ENCODE measurements at regions of chr9 and their contacts with region 1.

Region 1: GRCh38 chr9:91193658-91194391 is 167.9 kb downstream of the AUH start:
- DNase-seq: peak; percentile 93
- ATAC-seq: peak; percentile 80
- H3K4me3 ChIP-seq: peak overlapping the region; percentile 52 to 68 (median 56); a peak in 5 of 6 replicates
- H3K27ac ChIP-seq: peak overlapping the region; percentile 100
- H3K4me1 ChIP-seq: peaks cover 78% of the 10 kb centered on the region
- H3K27me3 ChIP-seq: no peaks in the 10 kb centered on the region
- CTCF ChIP-seq: peak; percentile 42
- EP300 ChIP-seq: peak in 1 of 2 experiments; percentile 91; a peak in 2 of 4 replicates
- POLR2A ChIP-seq: peak; percentile 79 to 94
- RAD21 ChIP-seq: peak; percentile 65

Region 2: DNA sequence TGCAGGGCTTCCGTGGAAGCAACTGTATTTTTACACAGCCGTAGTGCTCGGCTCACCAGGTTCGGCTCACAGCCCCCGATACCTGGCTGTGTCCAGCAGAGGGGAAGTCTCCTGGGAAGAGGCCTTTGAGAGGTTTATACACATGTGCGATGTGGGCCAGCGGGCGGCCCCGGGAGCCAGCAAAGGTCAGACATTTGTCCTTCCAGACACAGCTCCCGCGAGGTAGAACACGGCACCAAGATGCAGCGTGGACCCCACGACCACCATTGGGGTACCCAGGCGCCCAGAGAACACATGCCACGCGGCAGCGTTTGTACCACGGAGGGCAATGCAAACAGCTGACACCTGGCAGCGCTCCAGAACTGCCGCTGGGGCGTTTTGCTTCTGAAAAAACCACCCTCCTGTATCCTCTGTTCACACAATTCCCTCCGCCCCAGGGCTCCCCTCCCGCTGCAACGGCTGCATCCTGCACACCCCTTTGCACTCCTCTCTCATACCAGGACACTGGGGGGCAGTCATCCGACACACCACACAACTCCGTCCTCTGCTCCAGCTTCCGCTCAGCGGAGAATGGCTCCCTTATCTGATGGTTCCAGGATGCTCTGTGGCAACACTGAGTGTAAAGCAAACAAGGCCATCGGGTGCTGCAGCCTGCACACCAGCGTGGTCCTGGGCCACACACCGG is 156.9 kb before region 1 on chr9:
- CTCF ChIA-PET with region 1: no interaction called
- POLR2A ChIA-PET with region 1: interaction called, 58 read pairs
- in situ Hi-C with region 1: loop called (anchors 10 kb)
- intact Hi-C with region 1: loop called (anchors 1 kb)
- DNase-seq: peak; percentile 98
- ATAC-seq: peak; percentile 97
- H3K4me3 ChIP-seq: peak overlapping the region in 2 of 3 experiments; percentile 18 to 60; a peak in 3 of 6 replicates
- H3K27ac ChIP-seq: peak overlapping the region; percentile 94
- H3K4me1 ChIP-seq: peaks cover 62% of the 10 kb centered on the region
- H3K27me3 ChIP-seq: no peaks in the 10 kb centered on the region
- CTCF ChIP-seq: peak; percentile 99
- EP300 ChIP-seq: peak; percentile 86 to 91
- POLR2A ChIP-seq: peak in 1 of 2 experiments; percentile 83; a peak in 2 of 4 replicates
- RAD21 ChIP-seq: peak; percentile 97

Region 3: GRCh38 chr9:91060503-91061343 is 133.1 kb before region 1 on chr9:
- CTCF ChIA-PET with region 1: no interaction called
- POLR2A ChIA-PET with region 1: interaction called, 15 read pairs
- in situ Hi-C with region 1: no loop called
- intact Hi-C with region 1: loop called (anchors 10 kb)
- DNase-seq: peak; percentile 94
- ATAC-seq: peak; percentile 91
- H3K4me3 ChIP-seq: peak overlapping the region in 1 of 3 experiments; percentile 25; a peak in 1 of 6 replicates
- H3K27ac ChIP-seq: peak overlapping the region; percentile 87
- H3K4me1 ChIP-seq: peaks cover 51% of the 10 kb centered on the region
- H3K27me3 ChIP-seq: no peaks in the 10 kb centered on the region
- CTCF ChIP-seq: no peak
- EP300 ChIP-seq: peak; percentile 85 to 89
- POLR2A ChIP-seq: no peak
- RAD21 ChIP-seq: no peak

Region 4: DNA sequence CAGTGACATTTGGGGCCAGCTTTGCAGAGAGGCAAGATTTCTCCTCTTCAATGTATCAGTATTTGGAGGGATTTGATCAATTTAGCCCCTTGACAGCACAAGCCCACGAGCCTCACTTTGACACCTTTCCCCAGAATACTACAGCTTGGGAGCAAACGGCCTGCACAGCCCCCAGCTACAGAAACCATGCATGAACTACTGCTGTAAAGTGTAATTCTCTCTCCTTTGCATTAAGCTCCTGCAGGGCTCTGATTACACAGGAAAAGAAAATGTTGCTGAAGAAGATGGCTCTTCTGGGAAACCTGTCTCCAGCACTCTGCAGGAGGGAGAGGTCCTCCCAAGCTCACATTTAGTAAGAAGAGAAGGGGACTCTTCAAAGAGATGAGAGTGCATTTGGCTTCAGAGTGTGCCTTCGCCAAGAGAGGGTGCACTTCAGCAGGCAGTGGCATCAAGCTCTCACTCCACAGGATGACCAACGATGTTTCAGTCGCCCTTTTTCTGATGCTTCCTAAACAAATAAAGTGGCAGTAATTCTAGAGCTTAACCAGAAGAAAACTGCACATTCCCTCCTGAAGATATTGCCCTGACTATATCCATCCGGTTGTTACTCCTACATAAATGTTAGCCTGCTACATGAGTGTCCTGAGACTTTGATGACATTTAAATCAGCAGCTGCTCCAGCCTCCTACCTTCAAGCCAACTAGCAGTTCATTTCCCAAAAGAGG is 104.3 kb before region 1 on chr9:
- CTCF ChIA-PET with region 1: no interaction called
- POLR2A ChIA-PET with region 1: interaction called, 7 read pairs
- in situ Hi-C with region 1: no loop called
- intact Hi-C with region 1: loop called (anchors 2 kb)
- DNase-seq: peak; percentile 52
- ATAC-seq: peak; percentile 96
- H3K4me3 ChIP-seq: no peak overlapping the region
- H3K27ac ChIP-seq: peak overlapping the region; percentile 2
- H3K4me1 ChIP-seq: peaks cover 32% of the 10 kb centered on the region
- H3K27me3 ChIP-seq: no peaks in the 10 kb centered on the region
- CTCF ChIP-seq: peak; percentile 82
- EP300 ChIP-seq: no peak
- POLR2A ChIP-seq: no peak
- RAD21 ChIP-seq: peak; percentile 74; the same call in 1 of the 2 replicates

Region 5: GRCh38 chr9:91239367-91240111 is 45.7 kb after region 1 on chr9:
- CTCF ChIA-PET with region 1: no interaction called
- POLR2A ChIA-PET with region 1: interaction called, 11 read pairs
- in situ Hi-C with region 1: no loop called
- intact Hi-C with region 1: no loop called
- DNase-seq: peak; percentile 15
- ATAC-seq: no peak
- H3K4me3 ChIP-seq: no peak overlapping the region
- H3K27ac ChIP-seq: no peak overlapping the region
- H3K4me1 ChIP-seq: 0 out of 2 replicates have a peak, but pooled peaks cover 10% of the 10 kb centered on the region
- H3K27me3 ChIP-seq: no peaks in the 10 kb centered on the region
- CTCF ChIP-seq: no peak
- EP300 ChIP-seq: no peak
- POLR2A ChIP-seq: no peak
- RAD21 ChIP-seq: no peak

Region 6: DNA sequence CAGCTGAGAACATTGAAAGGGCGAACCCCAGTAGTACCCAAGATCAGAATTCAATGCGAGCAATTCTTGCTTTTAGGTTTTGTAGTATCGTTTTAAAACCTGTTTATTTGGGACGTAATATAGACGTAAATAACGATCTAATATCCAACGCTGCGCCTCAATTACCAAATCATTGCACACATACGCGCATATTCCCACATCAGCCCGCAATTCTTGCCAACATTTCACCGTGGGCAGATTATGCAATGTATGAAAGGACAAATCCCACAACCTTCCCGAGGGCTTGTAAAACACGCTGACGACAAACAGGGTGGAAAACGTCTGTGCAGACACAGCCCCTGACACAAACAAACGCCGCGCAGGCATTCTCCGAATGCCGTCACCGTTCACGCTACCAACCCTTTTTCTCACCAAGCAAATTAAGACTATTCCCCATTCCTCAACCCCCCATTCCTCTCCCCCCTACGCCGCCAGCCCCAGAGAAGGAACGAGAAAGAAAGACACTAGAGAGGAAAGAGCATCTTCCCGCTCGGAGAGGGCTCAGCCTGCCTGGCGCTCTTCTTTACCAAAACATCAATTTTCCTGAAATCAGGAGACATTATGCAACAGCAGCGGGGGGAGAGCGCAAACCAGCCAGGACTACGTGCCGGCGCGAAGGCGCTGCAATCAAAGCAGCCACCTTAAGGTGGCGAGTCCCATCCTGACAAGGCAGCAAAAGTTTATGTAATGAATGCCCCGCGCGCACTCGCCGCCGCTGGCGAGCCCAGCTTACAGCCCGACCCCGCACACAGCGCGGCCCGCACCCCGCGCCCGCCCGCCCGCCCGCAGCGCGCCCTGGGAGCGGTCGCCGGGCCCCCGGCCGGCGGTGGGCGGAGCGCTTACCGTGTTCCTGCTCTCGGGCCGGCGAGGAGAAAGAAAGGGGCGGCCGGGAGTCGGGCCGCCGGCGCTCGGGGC is 229.2 kb after region 1 on chr9:
- CTCF ChIA-PET with region 1: no interaction called
- POLR2A ChIA-PET with region 1: interaction called, 53 read pairs
- in situ Hi-C with region 1: loop called (anchors 5 kb)
- intact Hi-C with region 1: loop called (anchors 1 kb)
- DNase-seq: peak; percentile 44
- ATAC-seq: no peak
- H3K4me3 ChIP-seq: peak overlapping the region; percentile 87 to 98 (median 91)
- H3K27ac ChIP-seq: peak overlapping the region; percentile 83
- H3K4me1 ChIP-seq: peaks cover 41% of the 10 kb centered on the region
- H3K27me3 ChIP-seq: no peaks in the 10 kb centered on the region; a peak in 1 of 5 replicates
- CTCF ChIP-seq: no peak
- EP300 ChIP-seq: no peak
- POLR2A ChIP-seq: peak; percentile 8 to 44; a peak in 1 of 4 replicates
- RAD21 ChIP-seq: no peak

Measured in HepG2 (cell line).